CD4-positive, alpha-beta memory T cell (primary cell): ENCODE measurements at regions of chr14 and their contacts with region 1.

Region 1: GRCh38 chr14:89954070-89955028 is at the start of gene EFCAB11:
- DNase-seq: peak; percentile 96 to 98 (median 98)
- H3K4me3 ChIP-seq: peak within 1 kb of the TSS; percentile 62 to 90
- H3K4me3 Mint-ChIP-seq: peak within 1 kb of the TSS; percentile 95 to 98 (median 97)
- H3K27ac ChIP-seq: peak within 1 kb of the TSS; percentile 97
- H3K27ac Mint-ChIP-seq: peak within 1 kb of the TSS; percentile 88 to 97 (median 96)
- H3K4me1 ChIP-seq: peaks cover 30% of the 10 kb centered on the region
- H3K4me1 Mint-ChIP-seq: peaks cover 27 to 49% (median 38%) of the 10 kb centered on the region in 4 donors
- H3K27me3 ChIP-seq: no peaks in the 10 kb centered on the region
- H3K27me3 Mint-ChIP-seq: no peaks in the 10 kb centered on the region
- total RNA-seq, gene EFCAB11: 1.3 to 2.5 TPM

Region 2: DNA sequence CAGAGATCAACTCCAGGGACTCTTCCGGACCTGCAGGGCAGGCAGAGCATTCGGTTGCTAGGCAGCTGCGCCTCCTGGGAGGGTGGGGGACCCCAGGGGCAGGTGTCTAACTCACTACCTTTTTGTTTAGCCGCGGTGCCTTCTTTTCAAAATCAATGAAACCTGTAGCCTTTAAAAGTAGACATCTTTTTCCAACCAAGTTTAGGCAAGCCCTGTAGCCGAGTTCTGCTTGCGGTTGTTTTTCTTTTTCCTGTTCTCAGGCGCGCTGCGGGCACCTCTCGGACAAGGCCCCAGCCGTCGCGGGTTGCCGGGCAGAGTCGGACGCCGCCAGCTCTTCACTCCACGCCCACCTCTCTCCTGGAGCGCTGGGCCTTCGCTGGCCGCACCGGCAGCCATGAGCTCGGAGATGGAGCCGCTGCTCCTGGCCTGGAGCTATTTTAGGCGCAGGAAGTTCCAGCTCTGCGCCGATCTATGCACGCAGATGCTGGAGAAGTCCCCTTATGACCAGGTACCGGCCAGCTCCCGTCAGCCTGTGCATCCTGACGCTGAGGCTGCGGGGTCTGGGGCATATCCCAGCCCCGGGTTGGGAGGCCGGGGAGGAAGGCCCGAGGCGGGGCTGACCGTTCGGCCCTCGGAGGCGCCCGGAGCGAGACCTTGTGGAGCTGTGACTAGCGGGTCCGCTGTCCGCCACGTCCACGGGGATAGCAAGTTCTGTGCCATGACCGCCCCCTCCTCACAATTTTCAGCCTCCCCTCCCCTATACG is 1129.9 kb before region 1 on chr14 and contains the start of gene TTC8:
- CTCF ChIA-PET with region 1: no interaction called
- POLR2A ChIA-PET with region 1: interaction called, 8 read pairs
- intact Hi-C with region 1: loop called (anchors 10 kb)
- DNase-seq: peak; percentile 88 to 92 (median 90)
- H3K4me3 ChIP-seq: peak within 1 kb of the TSS; percentile 60 to 67
- H3K4me3 Mint-ChIP-seq: peak within 1 kb of the TSS; percentile 86 to 95 (median 90)
- H3K27ac ChIP-seq: peak within 1 kb of the TSS; percentile 66
- H3K27ac Mint-ChIP-seq: peak within 1 kb of the TSS; percentile 97 to 100 (median 99)
- H3K4me1 ChIP-seq: peaks cover 11% of the 10 kb centered on the region
- H3K4me1 Mint-ChIP-seq: peaks cover 5 to 14% (median 11%) of the 10 kb centered on the region in 4 donors
- H3K27me3 ChIP-seq: no peaks in the 10 kb centered on the region
- H3K27me3 Mint-ChIP-seq: peaks cover 0 to 8% of the 10 kb centered on the region in 2 donors
- total RNA-seq, gene TTC8: 1.4 to 1.5 TPM

Region 3: GRCh38 chr14:89720741-89721315 is 233.5 kb before region 1 on chr14:
- CTCF ChIA-PET with region 1: no interaction called
- POLR2A ChIA-PET with region 1: interaction called, 3 read pairs
- intact Hi-C with region 1: loop called (anchors 5 kb)
- DNase-seq: peak; percentile 85 to 88 (median 86)
- H3K4me3 ChIP-seq: peak overlapping the region in 1 of 2 donors; percentile 39
- H3K4me3 Mint-ChIP-seq: peak overlapping the region; percentile 49 to 82 (median 77)
- H3K27ac ChIP-seq: peak overlapping the region; percentile 67
- H3K27ac Mint-ChIP-seq: peak overlapping the region; percentile 87 to 98 (median 95)
- H3K4me1 ChIP-seq: peaks cover 83% of the 10 kb centered on the region
- H3K4me1 Mint-ChIP-seq: peaks cover 68 to 87% (median 77%) of the 10 kb centered on the region in 4 donors
- H3K27me3 ChIP-seq: no peaks in the 10 kb centered on the region
- H3K27me3 Mint-ChIP-seq: no peaks in the 10 kb centered on the region

Region 4: DNA sequence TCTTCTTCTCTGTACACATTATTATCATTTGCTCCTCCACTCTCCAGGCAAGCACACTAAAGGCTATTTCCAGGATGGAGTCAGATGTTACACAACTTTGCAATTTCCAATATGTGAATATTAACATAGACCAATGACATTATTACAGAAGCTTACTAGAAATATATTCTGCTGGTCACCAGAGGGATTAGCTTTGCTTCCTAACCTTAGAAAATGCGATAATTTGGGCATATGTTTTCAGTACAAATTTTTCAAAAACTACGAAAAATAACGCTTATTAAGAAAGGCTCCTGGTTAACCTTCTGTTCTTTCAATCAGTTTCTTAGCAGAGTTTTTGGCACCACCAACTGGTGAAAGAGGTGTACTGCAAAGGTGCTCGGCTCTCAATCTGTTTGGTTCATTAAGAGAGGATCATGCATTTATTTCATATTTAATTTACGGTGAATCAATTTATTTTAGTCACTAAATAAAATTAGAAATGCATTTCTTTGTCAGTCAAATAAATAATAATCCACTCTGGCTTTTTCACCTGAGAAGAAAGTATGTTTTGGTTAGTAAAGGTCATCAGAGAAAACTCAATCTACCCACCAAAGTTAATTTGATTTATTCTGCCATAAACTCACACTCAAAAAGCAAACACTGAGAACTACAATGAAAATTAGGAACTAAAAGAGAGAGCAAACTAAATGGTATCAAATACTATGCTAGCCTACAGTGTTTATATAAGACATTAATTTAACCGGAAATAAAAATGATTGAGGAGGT is 39.1 kb before region 1 on chr14:
- CTCF ChIA-PET with region 1: no interaction called
- POLR2A ChIA-PET with region 1: no interaction called
- intact Hi-C with region 1: no loop called
- DNase-seq: peak; percentile 53 to 69 (median 63)
- H3K4me3 ChIP-seq: no peak overlapping the region
- H3K4me3 Mint-ChIP-seq: no peak overlapping the region
- H3K27ac ChIP-seq: no peak overlapping the region
- H3K27ac Mint-ChIP-seq: peak overlapping the region in 1 of 7 donors; percentile 19
- H3K4me1 ChIP-seq: peaks cover 4% of the 10 kb centered on the region
- H3K4me1 Mint-ChIP-seq: peaks cover 0 to 4% (median 3%) of the 10 kb centered on the region in 4 donors
- H3K27me3 ChIP-seq: no peaks in the 10 kb centered on the region
- H3K27me3 Mint-ChIP-seq: peaks cover 4% of the 10 kb centered on the region in 2 donors

Region 5: GRCh38 chr14:89973234-89973823 is 19.0 kb after region 1 on chr14:
- CTCF ChIA-PET with region 1: interaction called, 52 read pairs
- POLR2A ChIA-PET with region 1: interaction called, 13 read pairs
- intact Hi-C with region 1: loop called (anchors 2 kb)
- DNase-seq: peak in 4 of 5 donors; percentile 25 to 37 (median 32)
- H3K4me3 ChIP-seq: no peak overlapping the region
- H3K4me3 Mint-ChIP-seq: no peak overlapping the region
- H3K27ac ChIP-seq: no peak overlapping the region
- H3K27ac Mint-ChIP-seq: peak overlapping the region in 1 of 7 donors; percentile 32
- H3K4me1 ChIP-seq: no peaks in the 10 kb centered on the region
- H3K4me1 Mint-ChIP-seq: peaks cover 0 to 3% (median 1%) of the 10 kb centered on the region in 4 donors
- H3K27me3 ChIP-seq: no peaks in the 10 kb centered on the region
- H3K27me3 Mint-ChIP-seq: no peaks in the 10 kb centered on the region

Region 6: GRCh38 chr14:90383075-90383730 is 428.9 kb after region 1 on chr14:
- CTCF ChIA-PET with region 1: no interaction called
- POLR2A ChIA-PET with region 1: interaction called, 9 read pairs
- intact Hi-C with region 1: loop called (anchors 2 kb)
- DNase-seq: peak; percentile 96 to 98 (median 97)
- H3K4me3 ChIP-seq: peak overlapping the region; percentile 86 to 95
- H3K4me3 Mint-ChIP-seq: no peak overlapping the region
- H3K27ac ChIP-seq: peak overlapping the region; percentile 93
- H3K27ac Mint-ChIP-seq: no peak overlapping the region
- H3K4me1 ChIP-seq: peaks cover 31% of the 10 kb centered on the region
- H3K4me1 Mint-ChIP-seq: peaks cover 4 to 18% (median 9%) of the 10 kb centered on the region in 4 donors
- H3K27me3 ChIP-seq: no peaks in the 10 kb centered on the region
- H3K27me3 Mint-ChIP-seq: no peaks in the 10 kb centered on the region